K562 (cell line): ENCODE measurements at regions of chr1 and their contacts with region 1.

Region 1: GRCh38 chr1:161209790-161210409 is 5.2 kb upstream of the FCER1G start:
- DNase-seq: peak; percentile 86 to 89 (median 86)
- ATAC-seq: peak; percentile 99
- H3K4me3 ChIP-seq: no peak overlapping the region
- H3K27ac ChIP-seq: no peak overlapping the region
- H3K4me1 ChIP-seq: peaks cover 3 to 4% of the 10 kb centered on the region in 2 experiments; a peak in 1 of 5 replicates
- H3K27me3 ChIP-seq: no peaks in the 10 kb centered on the region
- CTCF ChIP-seq: peak; percentile 94 to 97 (median 96)
- EP300 ChIP-seq: no peak
- POLR2A ChIP-seq: no peak
- RAD21 ChIP-seq: peak; percentile 89 to 93

Region 2: DNA sequence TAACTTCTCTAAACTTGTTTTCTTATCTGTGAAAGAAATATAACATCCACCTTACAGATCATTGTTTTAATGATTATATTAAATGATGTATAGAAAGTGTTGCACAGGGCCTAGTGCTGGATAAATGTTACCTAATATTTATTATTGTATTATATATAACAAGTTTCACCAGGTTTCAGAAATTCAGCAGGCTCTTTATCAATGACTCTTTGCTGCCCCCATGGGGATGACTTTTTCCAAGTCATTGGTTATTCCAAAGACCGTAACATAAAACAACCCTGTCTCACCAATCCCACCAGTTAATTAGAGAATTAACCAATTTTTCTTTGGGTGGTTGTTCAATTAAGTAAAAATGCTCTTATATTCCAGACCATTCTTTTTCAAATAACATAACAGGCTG is 70.1 kb before region 1 on chr1:
- CTCF ChIA-PET with region 1: no interaction called
- POLR2A ChIA-PET with region 1: no interaction called
- in situ Hi-C with region 1: no loop called
- intact Hi-C with region 1: no loop called
- DNase-seq: peak in 3 of 4 experiments; percentile 43 to 68 (median 60)
- ATAC-seq: peak; percentile 88
- H3K4me3 ChIP-seq: no peak overlapping the region
- H3K27ac ChIP-seq: no peak overlapping the region
- H3K4me1 ChIP-seq: peaks cover 0 to 4% of the 10 kb centered on the region in 2 experiments; a peak in 3 of 5 replicates
- H3K27me3 ChIP-seq: no peaks in the 10 kb centered on the region
- CTCF ChIP-seq: peak; percentile 55 to 85 (median 59); a peak in 5 of 6 replicates
- EP300 ChIP-seq: no peak
- POLR2A ChIP-seq: no peak
- RAD21 ChIP-seq: peak; percentile 65 to 75

Region 3: GRCh38 chr1:161192476-161193465 is 17.1 kb before region 1 on chr1:
- CTCF ChIA-PET with region 1: no interaction called
- POLR2A ChIA-PET with region 1: no interaction called
- in situ Hi-C with region 1: no loop called
- intact Hi-C with region 1: loop called (anchors 1 kb)
- DNase-seq: peak; percentile 79 to 86 (median 80)
- ATAC-seq: peak; percentile 94
- H3K4me3 ChIP-seq: no peak overlapping the region
- H3K27ac ChIP-seq: 0 out of 3 replicates have a peak overlapping the region, but pooled peaks have one; percentile 15
- H3K4me1 ChIP-seq: peaks cover 19 to 33% of the 10 kb centered on the region in 2 experiments
- H3K27me3 ChIP-seq: no peaks in the 10 kb centered on the region
- CTCF ChIP-seq: peak; percentile 93 to 97 (median 95)
- EP300 ChIP-seq: no peak; the same call in 1 of the 2 replicates
- POLR2A ChIP-seq: no peak
- RAD21 ChIP-seq: peak; percentile 76 to 91

Region 4: GRCh38 chr1:161266202-161266601 is 56.3 kb after region 1 on chr1:
- CTCF ChIA-PET with region 1: no interaction called
- POLR2A ChIA-PET with region 1: no interaction called
- in situ Hi-C with region 1: no loop called
- intact Hi-C with region 1: no loop called
- DNase-seq: no peak
- ATAC-seq: no peak
- H3K4me3 ChIP-seq: no peak overlapping the region
- H3K27ac ChIP-seq: no peak overlapping the region
- H3K4me1 ChIP-seq: no peaks in the 10 kb centered on the region; a peak in 1 of 5 replicates
- H3K27me3 ChIP-seq: peaks cover 7 to 30% of the 10 kb centered on the region in 2 experiments; a peak in 4 of 5 replicates
- CTCF ChIP-seq: no peak
- EP300 ChIP-seq: no peak
- POLR2A ChIP-seq: no peak
- RAD21 ChIP-seq: no peak

Region 5: DNA sequence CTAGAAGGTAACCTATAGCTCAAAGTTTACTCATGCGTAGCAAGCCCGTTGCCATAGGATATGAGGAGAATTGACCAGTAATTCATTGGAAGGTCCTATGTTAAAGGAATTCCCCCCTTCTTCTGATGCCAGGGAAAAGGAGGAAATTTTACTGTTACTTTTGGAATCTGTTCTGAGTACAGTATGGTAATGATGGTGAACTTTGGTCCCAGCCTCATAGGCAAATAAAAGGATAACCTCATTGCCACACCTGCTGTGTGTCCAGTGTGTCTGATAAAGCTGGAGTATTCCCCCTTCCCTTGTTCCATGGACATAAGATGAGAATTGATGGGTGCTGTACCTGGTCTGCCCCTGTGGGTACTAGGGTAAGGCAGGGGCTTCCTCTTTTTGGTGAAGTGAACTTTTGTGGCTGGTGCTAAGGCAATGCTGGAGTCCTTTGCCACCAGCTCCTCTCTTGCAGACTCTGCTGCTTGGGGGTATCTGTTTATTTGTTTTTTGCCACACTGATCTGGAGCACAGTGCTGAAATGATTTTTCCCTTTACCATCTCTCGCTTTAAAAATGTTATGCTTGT is 77.7 kb after region 1 on chr1:
- CTCF ChIA-PET with region 1: no interaction called
- POLR2A ChIA-PET with region 1: no interaction called
- in situ Hi-C with region 1: no loop called
- intact Hi-C with region 1: no loop called
- DNase-seq: no peak
- ATAC-seq: no peak
- H3K4me3 ChIP-seq: no peak overlapping the region
- H3K27ac ChIP-seq: no peak overlapping the region
- H3K4me1 ChIP-seq: no peaks in the 10 kb centered on the region
- H3K27me3 ChIP-seq: peaks cover 10 to 12% of the 10 kb centered on the region in 2 experiments
- CTCF ChIP-seq: no peak
- EP300 ChIP-seq: no peak
- POLR2A ChIP-seq: no peak
- RAD21 ChIP-seq: no peak